ENCODE measurements at regions of chr22 and their contacts with region 1.

Region 1: GRCh38 chr22:45268958-45269844 is 15.5 kb upstream of the UPK3A start:
- DNase-seq: peak; percentile 79 to 82
- H3K4me3 ChIP-seq: peak overlapping the region in 2 of 3 donors; percentile 42 to 51
- H3K27ac ChIP-seq: peak overlapping the region in 2 of 3 donors; percentile 25 to 27
- H3K4me1 ChIP-seq: peaks cover 10 to 19% of the 10 kb centered on the region in 2 donors
- H3K27me3 ChIP-seq: no peaks in the 10 kb centered on the region
- CTCF ChIP-seq: peak; percentile 54 to 97 (median 94)
- POLR2A ChIP-seq: peak in 1 of 2 donors; percentile 54

Region 2: DNA sequence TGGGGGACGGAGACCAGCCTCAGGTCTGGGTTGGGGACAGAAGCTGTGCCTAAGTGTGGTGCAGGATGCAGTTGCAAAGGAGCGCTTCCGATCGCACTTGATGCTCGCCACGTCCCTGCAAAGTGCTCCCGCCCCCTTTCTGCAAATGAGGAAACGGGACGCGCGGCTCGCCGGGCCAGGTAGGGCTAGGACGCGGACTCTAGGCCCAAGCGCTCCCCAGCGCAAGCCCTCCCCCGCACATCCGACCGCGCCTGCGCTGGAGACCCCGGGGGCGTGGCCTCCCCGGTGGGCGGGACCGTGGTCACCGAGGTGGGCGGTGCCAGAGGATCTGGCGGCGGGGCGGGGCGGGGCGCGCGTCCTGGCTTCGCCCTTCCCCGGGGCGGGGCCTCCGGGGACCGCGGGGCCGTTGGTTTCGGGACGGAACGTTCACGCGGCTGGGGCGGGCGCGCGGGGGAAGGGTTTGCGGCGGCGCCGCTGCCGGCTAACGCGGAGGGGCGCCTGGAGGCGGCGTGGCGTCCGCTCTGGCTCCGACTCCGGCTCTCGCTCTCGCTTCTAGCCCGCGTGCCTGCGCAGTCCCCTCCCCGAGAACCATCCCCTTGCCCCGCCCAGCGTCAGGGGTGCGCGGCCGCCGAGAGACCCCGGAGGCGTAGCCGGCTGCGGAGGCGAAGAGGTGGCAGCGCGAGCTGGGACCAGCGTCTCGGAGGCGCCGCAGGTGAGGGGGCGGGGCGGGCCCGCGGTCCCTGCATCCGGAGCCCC is 40.4 kb after region 1 on chr22 and contains the start of gene FAM118A:
- intact Hi-C with region 1: loop called (anchors 5 kb)
- DNase-seq: peak; percentile 90 to 93
- H3K4me3 ChIP-seq: peak within 1 kb of the TSS; percentile 84 to 93 (median 85)
- H3K27ac ChIP-seq: peak within 1 kb of the TSS; percentile 63 to 86 (median 85)
- H3K4me1 ChIP-seq: peaks cover 8 to 22% of the 10 kb centered on the region in 2 donors
- H3K27me3 ChIP-seq: no peaks in the 10 kb centered on the region
- CTCF ChIP-seq: peak in 1 of 6 experiments; percentile 17
- POLR2A ChIP-seq: peak in 1 of 2 donors; percentile 89
- total RNA-seq, gene FAM118A: 15.7 to 104 (median 75.3) TPM

Region 3: GRCh38 chr22:45429981-45430775 is 161.0 kb after region 1 on chr22:
- intact Hi-C with region 1: loop called (anchors 5 kb)
- DNase-seq: no peak
- H3K4me3 ChIP-seq: no peak overlapping the region
- H3K27ac ChIP-seq: no peak overlapping the region
- H3K4me1 ChIP-seq: peaks cover under 1% of the 10 kb centered on the region in 2 donors
- H3K27me3 ChIP-seq: no peaks in the 10 kb centered on the region
- CTCF ChIP-seq: no peak
- POLR2A ChIP-seq: no peak

Region 4: DNA sequence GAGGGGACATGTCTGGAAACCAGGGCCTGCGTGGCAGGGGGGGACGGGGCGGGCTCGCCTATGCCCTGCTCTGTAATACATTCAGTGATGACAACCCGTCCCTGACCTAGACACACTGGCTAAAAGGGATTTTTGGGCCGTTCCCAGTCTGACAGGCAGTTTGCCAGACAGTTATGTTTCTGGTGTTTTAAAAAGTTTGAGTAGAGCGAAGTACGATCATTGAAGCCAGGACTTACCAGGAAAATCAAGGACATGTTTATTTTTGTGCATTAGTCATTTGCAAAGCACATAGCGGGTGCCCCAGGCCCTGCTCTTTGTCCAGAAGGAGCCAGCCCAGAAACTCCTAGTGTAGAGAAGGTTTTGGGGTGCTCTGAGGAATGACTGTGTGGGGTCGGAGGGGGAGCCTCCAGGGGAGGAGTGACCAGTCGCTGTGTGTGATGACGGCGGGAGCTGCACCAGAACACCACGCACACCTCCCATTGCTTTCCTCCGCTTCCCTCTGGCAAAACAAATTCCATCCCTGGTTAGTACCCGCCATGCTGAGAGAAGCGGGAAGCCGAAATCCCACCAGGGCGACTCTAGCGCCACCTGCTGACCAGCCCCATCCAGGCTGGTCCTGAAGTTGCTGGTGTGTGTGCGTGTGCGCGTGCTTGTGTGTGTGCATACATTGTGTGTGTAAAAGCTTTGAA is 284.3 kb after region 1 on chr22:
- intact Hi-C with region 1: loop called (anchors 5 kb)
- DNase-seq: peak; percentile 76 to 79
- H3K4me3 ChIP-seq: no peak overlapping the region
- H3K27ac ChIP-seq: peak overlapping the region; percentile 14 to 41 (median 33)
- H3K4me1 ChIP-seq: peaks cover 9 to 35% of the 10 kb centered on the region in 2 donors
- H3K27me3 ChIP-seq: no peaks in the 10 kb centered on the region
- CTCF ChIP-seq: peak; percentile 58 to 97 (median 91)
- POLR2A ChIP-seq: no peak